ENCODE measurements at regions of chr5 and their contacts with region 1.

Region 1: DNA sequence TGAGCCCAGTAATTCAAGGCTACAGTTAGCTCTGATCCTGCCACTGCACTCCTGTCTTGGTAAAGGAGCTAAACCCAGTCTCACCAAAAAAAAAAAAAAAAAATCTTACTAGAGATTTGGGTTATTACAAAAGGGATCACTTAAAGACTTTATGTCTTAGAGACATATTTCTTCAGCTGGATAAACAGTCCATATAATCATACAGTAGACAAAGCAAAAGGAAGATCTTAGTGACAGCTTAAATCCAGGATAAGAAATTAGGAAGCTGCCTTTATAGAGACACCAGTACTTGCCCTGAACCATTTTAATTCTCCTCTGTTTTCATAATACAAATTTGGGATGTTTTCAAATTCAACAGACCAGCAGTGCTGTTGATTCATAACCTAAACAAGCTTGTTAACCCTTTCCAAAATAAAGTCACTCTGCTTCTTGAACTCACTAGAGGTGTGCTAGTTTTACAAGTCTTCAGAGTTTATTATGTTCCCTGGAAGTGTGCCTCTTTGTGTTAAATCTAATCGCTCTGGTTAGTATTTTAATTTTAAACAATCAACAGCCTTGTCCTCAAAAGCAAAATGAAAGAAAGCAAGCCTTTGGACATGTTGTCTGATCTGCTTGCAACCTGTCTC is 255.5 kb downstream of the ARRDC3 start:
- DNase-seq: no peak
- H3K4me3 ChIP-seq: no peak overlapping the region
- H3K27ac ChIP-seq: peak overlapping the region; percentile 70 to 78
- H3K4me1 ChIP-seq: peaks cover 30 to 53% of the 10 kb centered on the region in 2 donors
- H3K27me3 ChIP-seq: no peaks in the 10 kb centered on the region
- CTCF ChIP-seq: no peak

Region 2: DNA sequence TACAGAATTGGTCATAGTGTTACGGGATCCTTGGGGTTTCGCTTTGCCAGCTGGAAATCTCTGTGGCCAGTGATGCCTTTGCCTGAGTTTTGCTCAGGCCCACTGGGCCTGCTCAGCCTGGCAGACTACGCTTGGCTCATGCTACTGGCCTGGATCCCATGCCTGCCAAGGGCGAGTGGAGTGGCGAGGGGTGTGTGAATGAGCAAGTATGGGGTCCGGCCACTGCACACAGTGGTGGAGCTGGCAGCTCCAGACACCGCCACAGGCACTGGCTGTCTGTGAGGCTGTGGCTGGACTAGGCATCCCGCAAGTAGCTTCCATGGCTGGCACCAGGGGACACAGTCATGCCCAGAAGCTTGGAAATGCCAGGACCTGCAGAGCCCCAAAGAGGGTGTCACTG is 15.2 kb after region 1 on chr5:
- intact Hi-C with region 1: loop called (anchors 2 kb)
- DNase-seq: no peak
- H3K4me3 ChIP-seq: peak overlapping the region in 1 of 2 donors; percentile 29
- H3K27ac ChIP-seq: peak overlapping the region; percentile 71 to 76
- H3K4me1 ChIP-seq: peaks cover 0 to 24% of the 10 kb centered on the region in 2 donors
- H3K27me3 ChIP-seq: no peaks in the 10 kb centered on the region
- CTCF ChIP-seq: no peak

Measured in ascending aorta (tissue), 2 donors.